ENCODE measurements at regions of chr14 and their contacts with region 1.

Region 1: GRCh38 chr14:54642801-54643697 is 76.1 kb downstream of the SAMD4A start:
- DNase-seq: peak; percentile 28
- H3K4me3 Mint-ChIP-seq: no peak overlapping the region
- H3K27ac Mint-ChIP-seq: no peak overlapping the region
- H3K4me1 Mint-ChIP-seq: peaks cover 19% of the 10 kb centered on the region
- H3K27me3 Mint-ChIP-seq: no peaks in the 10 kb centered on the region

Region 2: GRCh38 chr14:54572316-54572715 is 70.7 kb before region 1 on chr14:
- CTCF ChIA-PET with region 1: interaction called, 4 read pairs
- intact Hi-C with region 1: loop called (anchors 1 kb)
- DNase-seq: peak; percentile 49
- H3K4me3 Mint-ChIP-seq: no peak overlapping the region
- H3K27ac Mint-ChIP-seq: no peak overlapping the region
- H3K4me1 Mint-ChIP-seq: peaks cover 19% of the 10 kb centered on the region
- H3K27me3 Mint-ChIP-seq: peaks cover 3% of the 10 kb centered on the region

Region 3: DNA sequence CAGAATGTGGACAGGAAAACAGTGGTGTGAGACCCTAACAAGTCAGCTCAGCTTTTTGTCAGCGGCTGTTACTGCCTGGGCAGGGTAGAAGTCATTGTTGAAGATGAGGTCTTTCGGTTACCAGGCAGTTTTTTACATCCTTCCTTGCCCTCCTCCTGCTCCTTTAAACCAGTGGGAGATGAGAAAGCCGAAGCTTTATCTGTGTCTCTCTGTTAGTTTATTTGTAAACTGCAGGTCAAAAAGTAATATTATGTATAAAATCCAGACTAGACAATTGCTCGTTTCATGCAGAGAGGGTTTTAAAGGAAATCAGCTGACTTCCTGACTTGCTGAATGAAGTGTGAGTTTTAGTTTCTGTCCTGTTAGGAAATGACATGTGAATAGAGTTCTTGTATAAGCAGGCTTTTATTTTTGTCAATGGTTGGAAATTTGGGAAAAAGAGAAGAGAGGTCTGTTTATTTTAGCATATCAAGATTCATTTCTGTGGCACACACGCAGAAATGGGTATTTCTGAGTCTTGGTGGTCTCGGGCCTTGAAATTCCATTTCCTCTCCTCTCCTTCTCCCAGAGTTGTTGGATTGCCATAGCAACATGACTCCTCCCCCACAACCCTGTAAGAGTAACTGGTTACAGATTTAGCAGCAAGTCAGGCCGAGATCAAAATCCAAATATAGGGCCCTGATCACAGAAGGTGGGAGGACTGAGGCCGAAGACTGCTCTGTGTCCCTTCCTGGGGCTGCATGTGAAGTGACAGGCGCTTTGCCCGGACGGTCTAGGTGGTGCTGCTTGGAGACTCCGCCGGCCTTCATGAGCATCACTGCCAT is 15.3 kb before region 1 on chr14:
- CTCF ChIA-PET with region 1: interaction called, 7 read pairs
- intact Hi-C with region 1: loop called (anchors 1 kb)
- DNase-seq: peak; percentile 62
- H3K4me3 Mint-ChIP-seq: peak overlapping the region; percentile 61
- H3K27ac Mint-ChIP-seq: peak overlapping the region; percentile 86
- H3K4me1 Mint-ChIP-seq: peaks cover 57% of the 10 kb centered on the region
- H3K27me3 Mint-ChIP-seq: no peaks in the 10 kb centered on the region

Region 4: DNA sequence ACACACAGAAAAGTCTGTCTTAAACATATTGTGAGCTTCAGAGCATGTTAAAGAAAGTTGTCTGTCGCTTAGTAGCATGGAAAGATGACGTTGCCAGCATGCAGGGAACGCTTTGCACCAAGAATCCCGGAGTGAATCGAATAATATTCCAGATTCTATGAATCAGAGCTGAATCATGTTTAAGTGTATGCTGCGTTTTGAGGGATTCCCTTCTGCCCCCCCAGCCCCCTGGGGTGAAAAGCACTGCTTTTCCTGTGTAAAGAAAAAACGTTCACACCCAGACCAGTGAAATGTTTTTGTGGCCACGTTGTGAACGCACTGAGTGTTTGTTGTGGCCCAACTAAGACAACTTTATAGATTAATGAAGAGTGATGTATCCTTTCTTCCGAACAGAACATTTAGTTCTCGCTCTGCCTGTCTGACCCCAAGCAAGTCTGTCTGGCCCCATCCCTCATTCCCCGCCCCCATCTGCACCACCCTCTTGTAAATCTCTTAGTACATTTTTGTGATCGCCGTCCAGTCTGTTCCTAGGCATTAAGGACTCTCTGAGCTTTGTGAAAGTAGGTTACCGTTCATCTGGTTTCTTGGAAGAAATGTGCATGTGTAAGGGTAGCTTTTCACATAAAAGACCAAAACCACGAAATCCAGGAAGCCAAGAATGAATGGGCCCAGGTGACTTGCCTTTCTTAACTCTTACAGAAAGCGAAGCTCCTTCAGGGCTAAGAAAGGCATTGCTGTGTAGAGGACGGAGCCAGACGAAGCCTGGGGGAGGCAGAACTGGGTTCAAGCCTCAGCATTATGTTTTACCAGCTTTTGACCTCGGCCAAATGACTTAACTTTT is 26.9 kb after region 1 on chr14:
- CTCF ChIA-PET with region 1: no interaction called
- intact Hi-C with region 1: loop called (anchors 2 kb)
- DNase-seq: peak; percentile 51
- H3K4me3 Mint-ChIP-seq: no peak overlapping the region
- H3K27ac Mint-ChIP-seq: no peak overlapping the region
- H3K4me1 Mint-ChIP-seq: peaks cover 30% of the 10 kb centered on the region
- H3K27me3 Mint-ChIP-seq: peaks cover 6% of the 10 kb centered on the region

Region 5: DNA sequence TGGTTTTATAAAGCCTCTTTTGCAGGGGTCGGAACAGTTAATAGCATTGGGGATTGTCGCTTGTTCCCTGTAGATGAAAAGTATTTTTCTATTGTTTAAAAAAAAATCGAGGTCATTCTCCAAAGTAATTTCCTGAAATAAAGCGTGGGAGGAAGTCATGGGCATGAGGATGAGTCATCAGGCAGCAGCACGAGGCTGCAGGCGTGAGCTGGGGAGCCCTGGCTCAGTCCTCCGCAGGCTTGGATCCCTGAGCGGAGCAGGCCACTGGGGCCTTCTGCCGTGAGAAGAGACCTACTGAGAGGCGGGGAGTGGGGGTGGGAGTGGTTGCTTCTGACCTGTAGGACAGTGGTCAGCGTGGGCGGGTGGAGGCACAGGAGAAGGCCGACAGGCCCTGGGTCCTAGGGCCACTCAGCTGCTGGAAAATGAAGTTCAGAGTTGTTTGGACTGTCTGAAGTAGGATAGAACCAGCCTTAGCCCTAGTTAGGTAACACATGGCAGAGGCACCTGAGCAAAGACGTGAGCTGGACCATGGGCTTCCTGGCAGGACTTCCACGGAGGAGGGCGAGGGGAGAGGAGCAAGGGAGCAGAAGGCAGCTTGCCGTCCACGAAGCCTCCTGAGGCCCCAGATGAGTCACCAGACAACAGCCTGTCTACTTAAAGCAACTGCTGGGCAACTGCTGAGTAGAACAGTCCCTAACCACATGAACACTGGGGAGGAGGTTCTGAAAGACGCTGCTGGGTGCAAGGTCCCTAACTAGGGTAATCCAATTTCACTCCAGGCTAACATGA is 464.9 kb after region 1 on chr14:
- CTCF ChIA-PET with region 1: no interaction called
- intact Hi-C with region 1: no loop called
- DNase-seq: peak; percentile 25
- H3K4me3 Mint-ChIP-seq: no peak overlapping the region
- H3K27ac Mint-ChIP-seq: no peak overlapping the region
- H3K4me1 Mint-ChIP-seq: peaks cover 21% of the 10 kb centered on the region
- H3K27me3 Mint-ChIP-seq: no peaks in the 10 kb centered on the region